Right ventricle myocardium superior (tissue), 1 donor: ENCODE measurements at regions of chr2 and their contacts with region 1.

Region 1: GRCh38 chr2:119290859-119291587 is 67.4 kb downstream of the STEAP3 start:
- DNase-seq: peak; percentile 84
- ATAC-seq: peak; percentile 88

Region 2: GRCh38 chr2:118882709-118883210 is 408.3 kb before region 1 on chr2:
- intact Hi-C with region 1: loop called (anchors 10 kb)
- DNase-seq: peak; percentile 68
- ATAC-seq: peak; percentile 85

Region 3: DNA sequence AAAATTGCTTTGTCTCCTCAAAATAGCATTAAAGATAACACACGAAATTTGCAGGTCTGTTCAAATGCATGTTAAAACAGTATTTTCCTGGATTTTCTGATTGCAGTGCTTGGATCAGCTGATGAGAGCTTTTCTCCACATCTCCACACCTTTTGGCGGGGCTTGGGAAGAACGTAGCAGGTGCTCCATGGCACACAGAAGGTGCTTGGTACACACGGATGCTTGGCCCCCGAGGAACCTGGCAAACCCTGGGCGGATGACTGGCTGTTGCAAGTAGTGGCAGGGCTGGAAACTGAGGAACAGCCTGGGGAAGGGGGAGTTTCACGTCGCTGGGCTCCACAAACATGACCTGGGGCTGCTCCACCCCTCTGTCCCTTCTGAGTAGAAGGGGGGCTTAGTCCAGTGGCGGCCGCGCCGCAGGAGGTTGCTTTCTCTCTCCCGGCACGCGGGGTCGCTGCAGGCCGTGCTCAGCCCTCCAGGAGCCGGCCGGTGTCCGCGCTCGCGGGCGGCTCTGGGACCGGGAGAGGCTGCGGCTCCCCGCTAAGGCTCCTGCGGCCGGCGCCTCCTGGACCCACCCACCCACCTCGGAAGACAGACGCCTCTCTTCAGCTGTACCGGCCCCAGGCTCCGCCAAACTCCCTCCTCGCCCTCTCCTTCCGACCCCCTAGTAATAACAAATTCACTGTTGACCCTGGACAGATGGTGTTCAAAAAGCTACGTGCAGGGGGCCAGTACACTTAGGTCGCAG is 279.7 kb before region 1 on chr2:
- intact Hi-C with region 1: loop called (anchors 5 kb)
- DNase-seq: peak; percentile 64
- ATAC-seq: peak; percentile 97

Region 4: GRCh38 chr2:119142824-119143223 is 148.2 kb before region 1 on chr2:
- intact Hi-C with region 1: no loop called
- DNase-seq: no peak
- ATAC-seq: no peak

Region 5: GRCh38 chr2:119352357-119352756 is 61.3 kb after region 1 on chr2:
- intact Hi-C with region 1: no loop called
- DNase-seq: no peak
- ATAC-seq: peak; percentile 85